Activated CD8-positive, alpha-beta T cell treated with anti-CD3 and anti-CD28 coated beads, Interleukin-2, amount 10 ng/mL, durations not matched to agents 7 days and 5 days (primary cell): ENCODE measurements at regions of chr6 and their contacts with region 1.

Region 1: GRCh38 chr6:137313928-137314855 is 95.0 kb upstream of the IFNGR1 start:
- DNase-seq: peak; percentile 78
- ATAC-seq: peak; percentile 86
- H3K4me3 Mint-ChIP-seq: no peak overlapping the region
- H3K27ac Mint-ChIP-seq: no peak overlapping the region
- H3K4me1 Mint-ChIP-seq: no peaks in the 10 kb centered on the region
- H3K27me3 Mint-ChIP-seq: peaks cover 19% of the 10 kb centered on the region

Region 2: GRCh38 chr6:137076277-137077068 is 237.7 kb before region 1 on chr6:
- CTCF ChIA-PET with region 1: interaction called, 21 read pairs
- POLR2A ChIA-PET with region 1: no interaction called
- DNase-seq: peak; percentile 70
- ATAC-seq: peak; percentile 92
- H3K4me3 Mint-ChIP-seq: no peak overlapping the region
- H3K27ac Mint-ChIP-seq: no peak overlapping the region
- H3K4me1 Mint-ChIP-seq: no peaks in the 10 kb centered on the region
- H3K27me3 Mint-ChIP-seq: peaks cover 44% of the 10 kb centered on the region

Region 3: GRCh38 chr6:137094411-137095008 is 219.7 kb before region 1 on chr6:
- CTCF ChIA-PET with region 1: interaction called, 29 read pairs
- POLR2A ChIA-PET with region 1: no interaction called
- DNase-seq: peak; percentile 76
- ATAC-seq: peak; percentile 79
- H3K4me3 Mint-ChIP-seq: no peak overlapping the region
- H3K27ac Mint-ChIP-seq: no peak overlapping the region
- H3K4me1 Mint-ChIP-seq: peaks cover 29% of the 10 kb centered on the region
- H3K27me3 Mint-ChIP-seq: peaks cover 14% of the 10 kb centered on the region

Region 4: DNA sequence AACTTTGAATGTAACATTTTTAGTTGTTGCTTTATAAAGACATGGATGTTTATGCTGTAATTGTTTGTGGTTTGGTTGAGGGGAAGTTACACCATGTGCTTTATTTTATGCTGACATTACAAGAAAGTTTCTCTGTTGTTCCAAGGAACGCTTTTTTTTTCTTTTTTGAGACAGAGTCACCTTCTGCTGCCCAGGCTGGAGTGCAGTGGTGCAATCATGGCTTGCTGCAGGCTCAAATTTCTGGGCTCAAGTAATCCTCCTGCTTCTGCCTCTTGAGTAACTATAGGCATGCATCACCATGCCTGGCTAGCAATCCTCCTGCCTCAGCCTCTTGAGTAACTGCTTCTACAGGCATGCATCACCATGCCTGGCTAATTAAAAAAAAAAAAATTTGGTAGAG is 74.0 kb before region 1 on chr6:
- CTCF ChIA-PET with region 1: no interaction called
- POLR2A ChIA-PET with region 1: no interaction called
- DNase-seq: no peak
- ATAC-seq: no peak
- H3K4me3 Mint-ChIP-seq: no peak overlapping the region
- H3K27ac Mint-ChIP-seq: no peak overlapping the region
- H3K4me1 Mint-ChIP-seq: peaks cover 8% of the 10 kb centered on the region
- H3K27me3 Mint-ChIP-seq: no peaks in the 10 kb centered on the region

Region 5: GRCh38 chr6:137271245-137272183 is 42.7 kb before region 1 on chr6:
- CTCF ChIA-PET with region 1: interaction called, 17 read pairs
- POLR2A ChIA-PET with region 1: no interaction called
- DNase-seq: no peak
- ATAC-seq: no peak
- H3K4me3 Mint-ChIP-seq: no peak overlapping the region
- H3K27ac Mint-ChIP-seq: no peak overlapping the region
- H3K4me1 Mint-ChIP-seq: peaks cover 3% of the 10 kb centered on the region
- H3K27me3 Mint-ChIP-seq: peaks cover 16% of the 10 kb centered on the region

Region 6: DNA sequence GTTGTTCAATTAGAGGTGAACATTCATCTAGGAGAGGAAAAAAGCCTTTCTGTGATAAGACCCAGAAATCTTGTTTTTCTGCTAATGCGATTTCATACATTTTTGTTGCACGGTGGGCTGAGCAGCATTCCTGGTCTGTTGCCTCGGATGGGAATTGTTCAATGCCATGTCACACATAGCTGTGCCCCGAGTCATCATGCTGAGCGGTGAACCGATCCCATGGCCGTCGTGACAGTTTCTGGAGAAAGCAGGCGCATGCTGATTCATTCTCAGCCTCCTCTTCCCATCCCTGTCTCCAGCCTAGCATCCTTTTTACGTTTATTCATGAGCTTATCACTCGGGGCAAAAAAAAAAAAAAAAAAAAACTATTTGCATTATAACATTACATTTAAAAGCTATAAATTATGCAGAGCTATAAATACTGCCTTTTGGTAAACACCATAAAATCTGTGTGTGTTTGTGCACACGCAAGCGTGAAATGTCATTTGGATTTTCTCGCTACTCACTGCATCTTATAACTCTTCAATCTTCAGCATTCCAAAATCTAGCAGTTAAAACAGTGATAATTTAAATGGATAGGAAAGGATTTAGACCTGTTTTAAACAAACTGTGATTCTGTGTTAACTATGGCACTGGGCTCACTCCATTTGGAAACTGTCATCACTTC is 36.1 kb before region 1 on chr6:
- CTCF ChIA-PET with region 1: interaction called, 17 read pairs
- POLR2A ChIA-PET with region 1: no interaction called
- DNase-seq: no peak
- ATAC-seq: no peak
- H3K4me3 Mint-ChIP-seq: no peak overlapping the region
- H3K27ac Mint-ChIP-seq: no peak overlapping the region
- H3K4me1 Mint-ChIP-seq: no peaks in the 10 kb centered on the region
- H3K27me3 Mint-ChIP-seq: peaks cover 29% of the 10 kb centered on the region

Region 7: GRCh38 chr6:137297887-137298286 is 16.3 kb before region 1 on chr6:
- CTCF ChIA-PET with region 1: interaction called, 14 read pairs
- POLR2A ChIA-PET with region 1: no interaction called
- DNase-seq: no peak
- ATAC-seq: no peak
- H3K4me3 Mint-ChIP-seq: no peak overlapping the region
- H3K27ac Mint-ChIP-seq: no peak overlapping the region
- H3K4me1 Mint-ChIP-seq: no peaks in the 10 kb centered on the region
- H3K27me3 Mint-ChIP-seq: peaks cover 7% of the 10 kb centered on the region

Region 8: DNA sequence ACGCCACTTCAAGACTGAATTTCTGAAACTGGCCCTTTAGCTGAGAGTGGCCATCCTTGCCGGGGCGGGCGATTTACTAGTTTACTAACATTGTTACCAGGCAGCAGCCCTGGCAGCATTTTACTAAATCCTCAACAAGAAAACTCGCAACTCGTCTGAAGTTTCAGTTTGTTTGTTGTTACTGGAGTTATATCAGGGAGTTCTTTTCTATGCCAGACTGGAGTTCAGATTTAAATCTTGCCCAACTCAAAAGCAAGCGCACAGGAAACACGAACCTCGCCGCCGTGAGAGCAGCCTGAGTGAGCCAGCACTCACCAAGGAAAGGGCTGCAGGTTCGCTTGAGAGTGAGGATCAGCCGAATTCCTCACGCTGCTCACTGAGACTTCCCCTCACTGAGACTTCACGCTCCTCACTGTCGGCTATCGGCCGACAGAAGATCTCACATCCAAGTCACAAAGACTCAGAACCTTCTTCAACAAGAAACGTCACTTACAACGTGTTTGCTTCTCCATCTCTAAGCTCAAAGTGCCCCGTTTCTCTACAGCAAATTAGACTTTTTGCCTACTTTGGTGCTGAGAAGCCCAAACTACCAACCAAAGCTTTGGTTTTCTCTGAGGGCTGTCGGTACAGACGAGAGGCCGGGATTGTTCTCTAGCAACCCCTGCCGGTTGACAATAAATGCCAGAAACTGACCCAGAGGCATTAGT is 101.1 kb after region 1 on chr6:
- CTCF ChIA-PET with region 1: interaction called, 16 read pairs
- POLR2A ChIA-PET with region 1: no interaction called
- DNase-seq: peak; percentile 79
- ATAC-seq: peak; percentile 98
- H3K4me3 Mint-ChIP-seq: peak overlapping the region; percentile 73
- H3K27ac Mint-ChIP-seq: peak overlapping the region; percentile 22
- H3K4me1 Mint-ChIP-seq: peaks cover 9% of the 10 kb centered on the region
- H3K27me3 Mint-ChIP-seq: peaks cover 7% of the 10 kb centered on the region

Region 9: GRCh38 chr6:137764464-137764863 is 450.3 kb after region 1 on chr6:
- CTCF ChIA-PET with region 1: no interaction called
- POLR2A ChIA-PET with region 1: no interaction called
- DNase-seq: no peak
- ATAC-seq: no peak
- H3K4me3 Mint-ChIP-seq: no peak overlapping the region
- H3K27ac Mint-ChIP-seq: no peak overlapping the region
- H3K4me1 Mint-ChIP-seq: peaks cover 18% of the 10 kb centered on the region
- H3K27me3 Mint-ChIP-seq: no peaks in the 10 kb centered on the region